ENCODE measurements at regions of chr11 and their contacts with region 1.

Region 1: DNA sequence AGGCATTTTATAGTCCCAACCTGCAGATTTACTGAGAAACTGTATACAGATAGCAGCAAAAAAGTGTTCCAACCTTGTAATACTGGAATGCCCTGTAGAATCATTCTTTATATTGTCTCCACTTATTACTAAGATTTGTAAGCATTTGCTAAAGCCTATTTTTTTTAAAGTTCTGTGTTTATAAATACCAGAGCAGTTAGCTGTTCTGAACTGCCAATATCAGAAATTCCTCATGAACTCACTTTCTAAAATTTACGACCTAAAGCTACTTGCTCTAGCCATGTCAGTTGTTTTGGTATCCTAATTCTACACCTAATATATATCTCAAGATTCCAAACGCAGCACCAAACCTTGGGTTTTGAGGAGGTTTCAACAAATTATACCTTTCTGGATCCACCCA is 103.2 kb downstream of the C11orf65 start:
- DNase-seq: peak; percentile 68
- ATAC-seq: peak; percentile 91
- H3K4me3 ChIP-seq: no peak overlapping the region
- H3K27ac ChIP-seq: no peak overlapping the region
- H3K4me1 ChIP-seq: peaks cover 7% of the 10 kb centered on the region
- H3K27me3 ChIP-seq: no peaks in the 10 kb centered on the region
- CTCF ChIP-seq: no peak
- POLR2A ChIP-seq: no peak
- RAD21 ChIP-seq: no peak

Region 2: DNA sequence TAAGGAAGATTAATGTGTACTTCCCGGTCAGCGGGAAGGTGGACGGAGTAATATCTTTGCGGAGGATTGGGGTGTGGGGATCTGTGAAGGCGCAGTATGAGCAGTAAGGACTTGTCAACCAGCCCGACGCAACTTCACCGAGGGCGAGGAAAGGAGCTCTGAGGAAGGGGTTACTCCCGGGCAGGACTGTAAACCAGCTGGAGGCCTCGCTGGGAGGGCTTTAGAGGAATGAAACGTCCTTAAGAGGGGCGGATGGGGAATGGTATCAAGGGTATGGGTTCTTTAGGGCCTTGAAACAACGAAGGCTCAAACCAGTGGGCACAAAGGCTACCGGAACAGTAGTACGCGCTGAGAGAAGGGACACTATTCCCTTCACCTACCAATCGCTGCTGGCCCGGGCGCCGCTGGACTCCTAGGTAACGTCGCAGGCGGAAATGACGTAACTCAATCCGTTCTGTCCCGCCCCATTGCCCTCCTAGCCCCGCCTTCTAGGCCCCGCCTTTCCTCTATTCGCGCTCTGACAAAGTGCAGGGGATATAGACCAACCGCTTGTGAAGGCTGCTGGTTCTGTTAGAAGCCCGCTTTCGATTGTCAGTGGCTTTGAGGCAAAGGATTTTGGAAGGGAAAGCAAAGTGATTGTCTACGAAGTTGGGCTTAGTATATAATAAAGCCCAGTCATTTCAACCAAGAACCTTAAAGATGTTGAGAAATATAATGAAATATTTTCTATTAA is 103.1 kb after region 1 on chr11 and contains the start of gene C11orf65:
- CTCF ChIA-PET with region 1: no interaction called
- POLR2A ChIA-PET with region 1: no interaction called
- dilution Hi-C with region 1: no loop called
- in situ Hi-C with region 1: no loop called
- intact Hi-C with region 1: loop called (anchors 5 kb)
- DNase-seq: peak; percentile 96
- ATAC-seq: peak; percentile 99
- H3K4me3 ChIP-seq: peak within 1 kb of the TSS; percentile 83
- H3K27ac ChIP-seq: peak within 1 kb of the TSS; percentile 95
- H3K4me1 ChIP-seq: peaks cover 2% of the 10 kb centered on the region; the same call in 1 of the 2 replicates
- H3K27me3 ChIP-seq: no peaks in the 10 kb centered on the region
- CTCF ChIP-seq: no peak
- POLR2A ChIP-seq: peak; percentile 95
- RAD21 ChIP-seq: no peak; the same call in none of the 2 replicates
- total RNA-seq, gene C11orf65: 0.18 and 0.56 TPM in 2 replicates

Region 3: GRCh38 chr11:108593214-108593922 is 229.2 kb after region 1 on chr11 and contains the start of gene EXPH5:
- CTCF ChIA-PET with region 1: no interaction called
- POLR2A ChIA-PET with region 1: no interaction called
- dilution Hi-C with region 1: no loop called
- in situ Hi-C with region 1: no loop called
- intact Hi-C with region 1: no loop called
- DNase-seq: peak; percentile 26
- ATAC-seq: peak; percentile 93
- H3K4me3 ChIP-seq: peak within 1 kb of the TSS; percentile 92
- H3K27ac ChIP-seq: no peak within 1 kb of the TSS
- H3K4me1 ChIP-seq: no peaks in the 10 kb centered on the region; the same call in 1 of the 2 replicates
- H3K27me3 ChIP-seq: peaks cover 11% of the 10 kb centered on the region
- CTCF ChIP-seq: no peak
- POLR2A ChIP-seq: no peak
- RAD21 ChIP-seq: no peak
- total RNA-seq, gene EXPH5: 0.56 and 0.72 TPM in 2 replicates

Region 4: GRCh38 chr11:108632041-108632440 is 267.9 kb after region 1 on chr11:
- CTCF ChIA-PET with region 1: no interaction called
- POLR2A ChIA-PET with region 1: no interaction called
- dilution Hi-C with region 1: no loop called
- in situ Hi-C with region 1: no loop called
- intact Hi-C with region 1: no loop called
- DNase-seq: no peak
- ATAC-seq: no peak
- H3K4me3 ChIP-seq: no peak overlapping the region
- H3K27ac ChIP-seq: no peak overlapping the region
- H3K4me1 ChIP-seq: 0 out of 2 replicates have a peak, but pooled peaks cover 2% of the 10 kb centered on the region
- H3K27me3 ChIP-seq: no peaks in the 10 kb centered on the region; the same call in 1 of the 2 replicates
- CTCF ChIP-seq: no peak
- POLR2A ChIP-seq: no peak
- RAD21 ChIP-seq: no peak